ENCODE measurements at regions of chr6 and their contacts with region 1.

Region 1: DNA sequence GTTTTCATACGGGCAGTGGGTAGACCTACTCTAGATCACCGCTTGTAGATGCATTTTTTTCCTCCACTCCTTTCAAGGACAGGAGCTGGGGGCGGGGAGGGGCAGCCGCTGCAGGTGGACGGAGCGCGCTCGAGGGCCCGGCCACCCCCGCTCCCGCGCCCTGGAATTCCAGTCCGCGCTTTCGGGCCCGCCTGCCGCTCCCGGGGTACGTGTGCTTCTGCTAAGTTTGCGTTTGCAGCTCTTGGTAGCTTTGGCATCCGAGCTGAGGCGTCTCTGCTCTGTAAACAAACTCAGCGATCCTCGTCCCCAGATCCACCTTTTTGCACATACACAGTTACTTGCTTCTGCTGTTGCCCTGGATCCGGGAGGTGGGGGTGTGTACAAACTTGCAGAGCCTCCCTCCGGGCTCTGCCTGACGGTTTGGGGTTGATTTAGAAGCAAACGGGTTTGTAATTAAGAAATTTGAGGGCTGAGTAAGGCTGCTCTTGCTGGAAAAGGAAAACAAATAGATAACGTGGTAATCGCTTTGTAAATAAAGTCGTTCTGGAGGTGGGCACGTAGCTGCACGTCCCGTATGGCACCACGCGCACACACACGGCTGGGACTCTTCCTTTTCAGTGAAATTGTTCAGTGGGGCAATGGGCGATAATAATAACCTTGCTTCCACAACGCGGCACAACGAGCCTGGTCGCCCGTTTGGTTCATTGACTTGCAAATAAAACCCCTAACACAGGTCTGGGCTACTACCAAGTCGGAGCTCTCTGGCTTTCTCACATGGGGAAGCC is 976 bp upstream of the CITED2 start:
- DNase-seq: peak; percentile 98
- ATAC-seq: peak; percentile 61
- H3K4me3 ChIP-seq: peak overlapping the region; percentile 69
- H3K27ac ChIP-seq: peak overlapping the region; percentile 91
- H3K4me1 ChIP-seq: peaks cover 8% of the 10 kb centered on the region
- H3K27me3 ChIP-seq: no peaks in the 10 kb centered on the region
- CTCF ChIP-seq: peak; percentile 37
- POLR2A ChIP-seq: peak; percentile 59
- RAD21 ChIP-seq: peak; percentile 57

Region 2: GRCh38 chr6:138155443-138155842 is 1220.0 kb before region 1 on chr6:
- CTCF ChIA-PET with region 1: no interaction called
- POLR2A ChIA-PET with region 1: no interaction called
- dilution Hi-C with region 1: no loop called
- in situ Hi-C with region 1: no loop called
- intact Hi-C with region 1: no loop called
- DNase-seq: no peak
- ATAC-seq: no peak
- H3K4me3 ChIP-seq: no peak overlapping the region
- H3K27ac ChIP-seq: no peak overlapping the region
- H3K4me1 ChIP-seq: no peaks in the 10 kb centered on the region
- H3K27me3 ChIP-seq: peaks cover 18% of the 10 kb centered on the region
- CTCF ChIP-seq: no peak
- POLR2A ChIP-seq: no peak
- RAD21 ChIP-seq: no peak

Region 3: GRCh38 chr6:139474145-139475108 is 99.0 kb after region 1 on chr6:
- CTCF ChIA-PET with region 1: no interaction called
- POLR2A ChIA-PET with region 1: no interaction called
- dilution Hi-C with region 1: no loop called
- in situ Hi-C with region 1: no loop called
- intact Hi-C with region 1: loop called (anchors 5 kb)
- DNase-seq: peak; percentile 66
- ATAC-seq: peak; percentile 75
- H3K4me3 ChIP-seq: no peak overlapping the region
- H3K27ac ChIP-seq: peak overlapping the region; percentile 61; the same call in 1 of the 2 replicates
- H3K4me1 ChIP-seq: peaks cover 16% of the 10 kb centered on the region
- H3K27me3 ChIP-seq: no peaks in the 10 kb centered on the region
- CTCF ChIP-seq: no peak
- POLR2A ChIP-seq: no peak
- RAD21 ChIP-seq: no peak

Region 4: GRCh38 chr6:139708337-139709199 is 333.1 kb after region 1 on chr6:
- CTCF ChIA-PET with region 1: no interaction called
- POLR2A ChIA-PET with region 1: interaction called, 4 read pairs
- dilution Hi-C with region 1: no loop called
- in situ Hi-C with region 1: no loop called
- intact Hi-C with region 1: loop called (anchors 2 kb)
- DNase-seq: peak; percentile 86
- ATAC-seq: peak; percentile 97
- H3K4me3 ChIP-seq: no peak overlapping the region
- H3K27ac ChIP-seq: peak overlapping the region; percentile 57; the same call in 1 of the 2 replicates
- H3K4me1 ChIP-seq: peaks cover 8% of the 10 kb centered on the region; the same call in 1 of the 2 replicates
- H3K27me3 ChIP-seq: no peaks in the 10 kb centered on the region
- CTCF ChIP-seq: no peak
- POLR2A ChIP-seq: no peak
- RAD21 ChIP-seq: 0 out of 2 replicates have a peak, but pooled peaks have one; percentile 8

Region 5: GRCh38 chr6:139927236-139927635 is 551.8 kb after region 1 on chr6:
- CTCF ChIA-PET with region 1: no interaction called
- POLR2A ChIA-PET with region 1: interaction called, 3 read pairs
- dilution Hi-C with region 1: no loop called
- in situ Hi-C with region 1: no loop called
- intact Hi-C with region 1: loop called (anchors 1 kb)
- DNase-seq: peak; percentile 93
- ATAC-seq: peak; percentile 48
- H3K4me3 ChIP-seq: no peak overlapping the region
- H3K27ac ChIP-seq: no peak overlapping the region
- H3K4me1 ChIP-seq: peaks cover 7% of the 10 kb centered on the region
- H3K27me3 ChIP-seq: no peaks in the 10 kb centered on the region
- CTCF ChIP-seq: peak; percentile 60
- POLR2A ChIP-seq: no peak
- RAD21 ChIP-seq: peak; percentile 68

Region 6: DNA sequence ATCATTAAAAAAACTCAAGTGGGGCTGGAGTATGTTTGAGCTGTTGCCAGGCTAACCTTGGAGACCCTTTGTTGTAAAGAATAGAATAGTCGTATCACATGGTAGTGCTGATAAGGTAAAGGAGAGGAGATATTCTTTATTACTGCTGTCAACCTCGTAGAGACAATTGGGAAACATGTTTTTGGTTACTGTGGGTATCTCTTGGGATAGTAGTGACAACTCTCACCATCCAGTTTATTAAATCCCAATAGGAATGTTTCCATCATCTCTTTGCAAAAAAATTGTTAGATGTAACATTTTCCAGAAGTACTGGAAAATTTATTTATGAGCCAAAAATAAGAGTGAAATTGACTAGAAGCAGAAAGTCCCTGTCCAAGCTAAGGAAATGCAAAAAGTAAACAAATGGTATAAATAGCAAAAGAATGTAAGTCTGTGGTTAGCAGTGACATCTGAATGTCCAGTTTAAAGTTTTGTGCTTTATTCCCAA is 828.3 kb after region 1 on chr6:
- CTCF ChIA-PET with region 1: no interaction called
- POLR2A ChIA-PET with region 1: no interaction called
- dilution Hi-C with region 1: no loop called
- in situ Hi-C with region 1: no loop called
- intact Hi-C with region 1: loop called (anchors 10 kb)
- DNase-seq: peak; percentile 79
- ATAC-seq: peak; percentile 80
- H3K4me3 ChIP-seq: no peak overlapping the region
- H3K27ac ChIP-seq: peak overlapping the region; percentile 55; the same call in 1 of the 2 replicates
- H3K4me1 ChIP-seq: peaks cover 2% of the 10 kb centered on the region; the same call in 1 of the 2 replicates
- H3K27me3 ChIP-seq: no peaks in the 10 kb centered on the region
- CTCF ChIP-seq: no peak
- POLR2A ChIP-seq: no peak
- RAD21 ChIP-seq: no peak

Region 7: DNA sequence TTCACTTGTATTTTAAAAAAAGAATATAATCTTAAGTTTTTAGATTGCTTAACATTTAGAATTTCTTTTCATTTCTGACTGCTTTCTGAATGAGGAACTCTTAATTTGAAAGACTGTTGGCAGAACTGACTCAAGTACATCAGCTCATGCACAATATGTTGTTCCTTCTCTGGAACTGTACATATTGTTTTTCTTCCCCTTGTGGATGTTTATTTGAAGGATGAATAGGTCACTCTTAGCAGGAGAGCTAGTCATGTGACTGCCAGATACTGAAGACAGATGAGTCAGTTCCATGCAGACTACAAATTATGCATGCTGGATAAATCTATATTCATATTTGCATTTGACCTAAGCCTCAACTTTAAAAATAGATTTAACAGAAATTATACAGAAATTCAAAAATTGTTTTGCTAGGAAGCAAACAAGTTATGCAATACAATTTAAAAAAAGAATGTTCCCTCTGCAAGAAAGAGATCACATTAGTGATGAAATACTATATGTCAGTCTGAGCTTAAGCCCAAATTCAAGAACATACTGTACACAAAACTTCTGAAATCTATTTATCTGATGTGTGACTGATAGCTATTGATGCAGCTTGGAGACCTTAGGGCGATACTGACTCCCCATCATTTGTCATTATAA is 1482.4 kb after region 1 on chr6:
- CTCF ChIA-PET with region 1: no interaction called
- POLR2A ChIA-PET with region 1: no interaction called
- dilution Hi-C with region 1: no loop called
- in situ Hi-C with region 1: no loop called
- intact Hi-C with region 1: loop called (anchors 2 kb)
- DNase-seq: peak; percentile 95
- ATAC-seq: peak; percentile 96
- H3K4me3 ChIP-seq: no peak overlapping the region
- H3K27ac ChIP-seq: peak overlapping the region; percentile 56; the same call in 1 of the 2 replicates
- H3K4me1 ChIP-seq: peaks cover 6% of the 10 kb centered on the region
- H3K27me3 ChIP-seq: no peaks in the 10 kb centered on the region
- CTCF ChIP-seq: no peak
- POLR2A ChIP-seq: no peak
- RAD21 ChIP-seq: peak; percentile 22; the same call in 1 of the 2 replicates